Mammary epithelial cell (primary cell): ENCODE measurements at regions of chr12 and their contacts with region 1.

Region 1: DNA sequence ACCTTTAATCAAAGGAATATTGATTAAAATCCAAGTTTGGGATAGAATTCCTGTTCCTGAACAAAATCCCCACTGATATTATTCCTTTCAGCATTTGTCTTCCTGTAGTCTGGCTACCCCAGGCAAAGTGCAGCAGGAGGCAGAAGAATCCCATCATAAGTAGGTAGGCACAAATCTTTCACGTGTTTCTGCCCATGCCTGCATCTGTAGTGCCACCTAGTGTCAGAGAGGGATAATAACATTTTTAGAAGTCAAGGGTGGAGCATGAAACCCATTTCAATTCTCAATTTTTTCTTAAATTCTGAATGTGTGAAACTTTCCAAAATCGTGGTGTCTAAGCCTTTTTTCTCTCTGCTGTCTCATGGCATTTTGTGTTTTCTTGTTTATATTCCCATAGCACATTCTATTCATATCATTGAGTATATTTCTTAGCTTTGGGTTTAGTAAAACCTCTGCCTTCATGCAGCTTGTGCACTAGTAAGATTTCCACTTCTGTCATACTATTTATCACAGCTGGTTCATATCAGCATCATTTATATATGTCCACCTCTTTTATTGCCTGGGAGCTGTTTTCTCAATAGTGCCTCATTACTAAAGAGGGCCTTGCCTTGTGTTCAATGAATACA is 47.8 kb upstream of the RERG start:
- DNase-seq: peak; percentile 50
- H3K4me3 ChIP-seq: no peak overlapping the region
- H3K27ac ChIP-seq: no peak overlapping the region
- H3K4me1 ChIP-seq: peaks cover 5% of the 10 kb centered on the region
- H3K27me3 ChIP-seq: no peaks in the 10 kb centered on the region
- CTCF ChIP-seq: peak; percentile 83 to 89

Region 2: GRCh38 chr12:14629832-14630710 is 639.0 kb before region 1 on chr12:
- CTCF ChIA-PET with region 1: no interaction called
- dilution Hi-C with region 1: no loop called
- in situ Hi-C with region 1: no loop called
- intact Hi-C with region 1: loop called (anchors 5 kb)
- DNase-seq: peak; percentile 56
- H3K4me3 ChIP-seq: no peak overlapping the region
- H3K27ac ChIP-seq: no peak overlapping the region
- H3K4me1 ChIP-seq: no peaks in the 10 kb centered on the region
- H3K27me3 ChIP-seq: no peaks in the 10 kb centered on the region
- CTCF ChIP-seq: peak; percentile 99 to 100

Region 3: DNA sequence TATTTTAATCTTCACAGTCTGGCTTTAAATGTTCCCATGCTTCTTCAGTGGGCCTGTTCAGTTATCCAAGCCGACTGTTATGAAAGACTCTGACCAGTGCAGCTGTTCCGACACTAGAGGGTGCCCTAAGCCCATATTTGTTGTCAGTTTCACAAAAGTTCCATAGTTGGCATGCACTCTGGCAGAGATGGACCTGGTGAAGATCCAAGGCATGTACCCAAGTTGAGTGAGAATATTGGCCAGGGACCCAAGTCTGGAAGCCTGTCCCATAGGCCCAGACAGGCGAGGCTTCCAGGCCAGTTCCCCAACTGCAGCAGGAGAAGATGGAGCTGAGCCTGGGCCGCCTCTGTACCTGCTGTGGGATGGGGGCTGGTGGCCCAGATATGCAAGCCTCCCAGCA is 545.3 kb before region 1 on chr12:
- CTCF ChIA-PET with region 1: no interaction called
- dilution Hi-C with region 1: no loop called
- in situ Hi-C with region 1: no loop called
- intact Hi-C with region 1: loop called (anchors 1 kb)
- DNase-seq: peak; percentile 41
- H3K4me3 ChIP-seq: no peak overlapping the region
- H3K27ac ChIP-seq: no peak overlapping the region
- H3K4me1 ChIP-seq: no peaks in the 10 kb centered on the region
- H3K27me3 ChIP-seq: no peaks in the 10 kb centered on the region
- CTCF ChIP-seq: peak; percentile 75 to 78

Region 4: GRCh38 chr12:15001733-15002382 is 267.2 kb before region 1 on chr12:
- CTCF ChIA-PET with region 1: no interaction called
- dilution Hi-C with region 1: no loop called
- in situ Hi-C with region 1: no loop called
- intact Hi-C with region 1: loop called (anchors 5 kb)
- DNase-seq: no peak
- H3K4me3 ChIP-seq: no peak overlapping the region
- H3K27ac ChIP-seq: no peak overlapping the region
- H3K4me1 ChIP-seq: peaks cover 2% of the 10 kb centered on the region
- H3K27me3 ChIP-seq: no peaks in the 10 kb centered on the region
- CTCF ChIP-seq: no peak

Region 5: DNA sequence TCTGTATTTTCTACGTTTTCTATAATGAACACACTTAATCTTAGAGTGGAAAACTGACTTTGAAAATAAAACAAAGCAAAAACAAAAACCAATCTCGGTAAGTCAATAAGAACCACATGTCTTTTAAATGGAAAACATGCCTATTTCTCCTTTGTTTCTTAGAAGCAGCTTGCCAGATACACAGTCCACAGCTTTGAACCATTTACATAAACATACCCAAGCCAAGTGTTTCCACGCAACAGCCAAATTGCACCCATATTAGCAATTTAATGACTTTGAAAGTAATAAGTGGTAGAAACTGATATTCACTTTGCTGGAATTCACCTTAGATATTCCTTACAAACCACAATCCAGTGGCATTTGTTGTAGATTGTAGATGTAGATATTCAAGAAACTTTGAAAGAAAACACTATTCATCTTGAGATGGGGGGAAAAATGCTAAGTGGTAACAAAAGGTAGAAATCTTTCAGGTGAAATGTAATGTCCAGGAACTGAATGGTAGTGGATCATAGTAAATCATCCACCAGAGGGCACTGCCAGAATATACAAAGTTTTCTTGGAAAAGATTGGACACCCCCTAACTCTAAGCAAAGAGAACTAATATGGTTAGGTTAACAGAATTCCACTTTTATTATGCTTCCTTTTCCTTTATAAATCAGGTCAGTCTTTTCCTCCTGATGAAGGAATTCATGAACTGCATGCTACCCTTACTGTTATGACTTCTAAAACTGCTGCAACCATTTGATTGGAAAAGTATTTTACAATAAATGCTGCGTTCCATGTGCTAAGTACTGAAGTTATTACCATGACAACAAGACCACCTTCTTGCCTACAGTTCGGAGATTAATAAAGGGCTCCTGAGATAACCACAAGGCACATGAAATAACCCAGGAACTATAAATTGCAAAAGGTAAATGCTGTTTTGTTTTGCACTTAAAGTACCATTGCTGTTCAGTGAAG is 117.6 kb before region 1 on chr12:
- CTCF ChIA-PET with region 1: no interaction called
- dilution Hi-C with region 1: no loop called
- in situ Hi-C with region 1: no loop called
- intact Hi-C with region 1: loop called (anchors 1 kb)
- DNase-seq: no peak
- H3K4me3 ChIP-seq: no peak overlapping the region
- H3K27ac ChIP-seq: no peak overlapping the region
- H3K4me1 ChIP-seq: peaks cover 10% of the 10 kb centered on the region
- H3K27me3 ChIP-seq: no peaks in the 10 kb centered on the region
- CTCF ChIP-seq: peak; percentile 28 to 61

Region 6: DNA sequence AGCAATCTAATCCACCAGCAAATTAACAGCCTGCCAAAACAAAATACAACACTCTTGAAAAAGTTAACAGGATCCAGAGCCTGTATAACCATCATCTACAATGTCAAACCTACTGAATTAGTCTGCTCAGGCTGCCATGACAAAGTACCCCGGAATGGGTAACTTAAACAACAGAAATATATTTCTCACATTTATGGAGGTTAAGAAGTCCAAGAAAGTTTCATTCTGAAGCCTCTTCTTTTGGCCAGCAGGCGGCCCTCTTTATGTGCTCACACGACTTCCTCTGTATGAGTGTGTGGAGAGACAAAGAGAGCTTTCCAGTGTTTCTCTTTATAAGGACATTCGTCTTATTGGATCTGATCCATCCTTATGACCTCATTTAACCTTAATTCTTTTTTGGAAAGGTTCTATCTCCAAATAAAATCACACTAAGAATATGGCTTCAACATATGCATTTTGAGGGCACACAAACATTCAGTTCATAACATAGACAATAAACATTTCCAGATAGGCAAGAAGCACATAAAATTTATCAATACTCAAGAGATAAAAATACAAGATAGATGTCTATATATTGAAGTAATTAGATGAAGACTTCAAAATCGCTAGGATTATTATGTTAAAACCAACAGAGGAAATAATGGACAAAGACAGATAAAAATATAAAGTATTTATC is 41.9 kb before region 1 on chr12:
- CTCF ChIA-PET with region 1: no interaction called
- dilution Hi-C with region 1: no loop called
- in situ Hi-C with region 1: no loop called
- intact Hi-C with region 1: loop called (anchors 1 kb)
- DNase-seq: peak; percentile 36
- H3K4me3 ChIP-seq: no peak overlapping the region
- H3K27ac ChIP-seq: no peak overlapping the region
- H3K4me1 ChIP-seq: no peaks in the 10 kb centered on the region
- H3K27me3 ChIP-seq: no peaks in the 10 kb centered on the region
- CTCF ChIP-seq: peak; percentile 76 to 79